ENCODE measurements at regions of chrX and their contacts with region 1.

Region 1: GRCh38 chrX:50594788-50595187 is 124.2 kb upstream of the DGKK start:
- DNase-seq: no peak
- H3K4me3 ChIP-seq: no peak overlapping the region
- H3K27ac ChIP-seq: peak overlapping the region in 3 of 59 donors; percentile 1 to 16 (median 2)
- H3K27me3 ChIP-seq: peaks cover 0 to 69% (median 6%) of the 10 kb centered on the region in 45 donors
- CTCF ChIP-seq: no peak

Region 2: GRCh38 chrX:50448565-50448964 is 146.2 kb before region 1 on chrX:
- intact Hi-C with region 1: no loop called
- DNase-seq: no peak
- H3K4me3 ChIP-seq: no peak overlapping the region
- H3K27ac ChIP-seq: no peak overlapping the region
- H3K27me3 ChIP-seq: peaks cover 0 to 83% (median 34%) of the 10 kb centered on the region in 45 donors
- CTCF ChIP-seq: no peak

Region 3: GRCh38 chrX:50643525-50644137 is 48.8 kb after region 1 on chrX:
- intact Hi-C with region 1: loop called in 1 of 2 experiments (anchors 10 kb)
- DNase-seq: no peak
- H3K4me3 ChIP-seq: peak overlapping the region in 7 of 59 donors; percentile 7 to 39 (median 30)
- H3K27ac ChIP-seq: peak overlapping the region in 1 of 59 donors; percentile 31
- H3K27me3 ChIP-seq: peaks cover 0 to 83% (median 16%) of the 10 kb centered on the region in 45 donors
- CTCF ChIP-seq: no peak

Region 4: DNA sequence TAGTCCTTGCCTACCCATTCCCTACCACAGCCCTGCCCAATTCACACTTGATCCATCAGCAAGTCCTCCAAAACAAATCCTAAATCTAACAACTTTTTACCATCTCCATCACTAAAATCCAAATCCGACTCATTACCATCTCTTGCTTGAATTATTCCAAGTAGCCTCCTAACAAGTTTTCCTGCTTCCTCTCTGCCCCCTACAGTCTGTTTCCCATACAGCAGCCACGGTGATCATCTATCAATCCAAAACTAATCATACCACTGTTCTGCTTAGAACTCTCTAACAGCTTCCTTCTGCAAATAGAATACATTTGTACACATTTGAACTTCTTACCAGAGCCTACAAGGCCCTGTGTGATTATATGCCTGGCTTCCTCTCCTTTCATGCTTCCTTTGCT is 86.2 kb after region 1 on chrX:
- intact Hi-C with region 1: loop called in 1 of 2 experiments (anchors 10 kb)
- DNase-seq: no peak
- H3K4me3 ChIP-seq: no peak overlapping the region
- H3K27ac ChIP-seq: no peak overlapping the region
- H3K27me3 ChIP-seq: peaks cover 0 to 88% (median 33%) of the 10 kb centered on the region in 45 donors
- CTCF ChIP-seq: peak in 54 of 56 donors; percentile 16 to 64 (median 49)